ENCODE measurements at regions of chr7 and their contacts with region 1.

Region 1: GRCh38 chr7:77651573-77652162 is 44.6 kb upstream of the RSBN1L start:
- DNase-seq: peak; percentile 61
- H3K4me3 Mint-ChIP-seq: no peak overlapping the region
- H3K27ac Mint-ChIP-seq: no peak overlapping the region
- H3K4me1 Mint-ChIP-seq: no peaks in the 10 kb centered on the region
- H3K27me3 Mint-ChIP-seq: no peaks in the 10 kb centered on the region
- CTCF ChIP-seq: peak; percentile 66

Region 2: GRCh38 chr7:77439572-77439971 is 212.1 kb before region 1 on chr7:
- CTCF ChIA-PET with region 1: interaction called, 23 read pairs
- POLR2A ChIA-PET with region 1: no interaction called
- intact Hi-C with region 1: no loop called
- DNase-seq: peak; percentile 76
- H3K4me3 Mint-ChIP-seq: no peak overlapping the region
- H3K27ac Mint-ChIP-seq: no peak overlapping the region
- H3K4me1 Mint-ChIP-seq: peaks cover 14% of the 10 kb centered on the region
- H3K27me3 Mint-ChIP-seq: no peaks in the 10 kb centered on the region
- CTCF ChIP-seq: peak; percentile 41

Region 3: GRCh38 chr7:77498659-77499422 is 152.8 kb before region 1 on chr7:
- CTCF ChIA-PET with region 1: no interaction called
- POLR2A ChIA-PET with region 1: no interaction called
- intact Hi-C with region 1: no loop called
- DNase-seq: no peak
- H3K4me3 Mint-ChIP-seq: no peak overlapping the region
- H3K27ac Mint-ChIP-seq: no peak overlapping the region
- H3K4me1 Mint-ChIP-seq: peaks cover 7% of the 10 kb centered on the region
- H3K27me3 Mint-ChIP-seq: no peaks in the 10 kb centered on the region
- CTCF ChIP-seq: no peak

Region 4: GRCh38 chr7:77667459-77668086 is 15.9 kb after region 1 on chr7:
- CTCF ChIA-PET with region 1: interaction called, 25 read pairs
- POLR2A ChIA-PET with region 1: no interaction called
- intact Hi-C with region 1: no loop called
- DNase-seq: no peak
- H3K4me3 Mint-ChIP-seq: no peak overlapping the region
- H3K27ac Mint-ChIP-seq: no peak overlapping the region
- H3K4me1 Mint-ChIP-seq: peaks cover 5% of the 10 kb centered on the region
- H3K27me3 Mint-ChIP-seq: no peaks in the 10 kb centered on the region
- CTCF ChIP-seq: no peak

Region 5: GRCh38 chr7:77684030-77684429 is 32.4 kb after region 1 on chr7:
- CTCF ChIA-PET with region 1: interaction called, 11 read pairs
- POLR2A ChIA-PET with region 1: interaction called, 3 read pairs
- intact Hi-C with region 1: no loop called
- DNase-seq: peak; percentile 45
- H3K4me3 Mint-ChIP-seq: no peak overlapping the region
- H3K27ac Mint-ChIP-seq: no peak overlapping the region
- H3K4me1 Mint-ChIP-seq: peaks cover 23% of the 10 kb centered on the region
- H3K27me3 Mint-ChIP-seq: no peaks in the 10 kb centered on the region
- CTCF ChIP-seq: no peak

Region 6: GRCh38 chr7:77747178-77747577 is 95.5 kb after region 1 on chr7:
- CTCF ChIA-PET with region 1: interaction called, 10 read pairs
- POLR2A ChIA-PET with region 1: no interaction called
- intact Hi-C with region 1: no loop called
- DNase-seq: no peak
- H3K4me3 Mint-ChIP-seq: no peak overlapping the region
- H3K27ac Mint-ChIP-seq: no peak overlapping the region
- H3K4me1 Mint-ChIP-seq: no peaks in the 10 kb centered on the region
- H3K27me3 Mint-ChIP-seq: no peaks in the 10 kb centered on the region
- CTCF ChIP-seq: no peak

Region 7: DNA sequence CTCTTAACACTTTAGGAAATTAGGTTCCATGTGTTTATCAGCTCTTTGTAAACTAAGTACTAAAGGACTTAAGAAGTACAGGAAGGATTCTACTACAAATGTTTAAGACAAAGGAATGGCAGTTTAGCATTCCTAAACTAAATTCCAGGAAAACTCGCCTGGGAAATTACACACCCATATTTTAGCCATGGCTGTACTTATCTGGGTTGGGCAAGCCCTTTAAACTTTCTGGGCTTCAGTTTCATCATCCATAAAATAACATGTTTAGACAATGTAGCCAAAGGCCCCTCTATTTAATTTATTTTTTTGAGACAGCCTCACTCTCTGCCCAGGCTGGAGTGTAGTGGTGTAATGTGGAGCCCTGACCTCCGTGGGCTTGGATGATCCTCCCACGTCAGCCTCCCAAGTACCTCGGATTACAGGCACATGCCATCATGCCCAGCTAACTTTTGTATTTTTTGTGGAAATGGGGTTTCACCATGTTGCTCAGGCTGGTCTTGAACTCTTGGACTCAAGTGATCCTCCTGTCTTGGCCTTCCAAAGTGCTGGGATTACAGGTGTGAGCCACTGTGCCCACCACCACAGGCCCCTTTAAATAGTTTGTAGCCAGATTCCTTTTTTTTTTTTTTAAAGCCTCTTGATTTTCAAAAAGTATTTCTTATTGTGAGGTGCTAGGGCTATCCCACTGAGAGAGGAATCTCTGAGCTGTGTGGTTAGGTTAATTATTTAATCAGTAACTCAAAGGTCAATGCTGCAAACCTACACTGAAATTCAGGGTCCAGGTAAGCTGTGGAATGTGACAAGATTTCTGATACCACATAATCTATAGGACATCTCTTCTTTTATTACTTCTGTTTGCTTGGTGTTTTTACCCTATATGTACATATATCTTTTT is 114.5 kb after region 1 on chr7:
- CTCF ChIA-PET with region 1: interaction called, 196 read pairs
- POLR2A ChIA-PET with region 1: interaction called, 3 read pairs
- intact Hi-C with region 1: no loop called
- DNase-seq: no peak
- H3K4me3 Mint-ChIP-seq: no peak overlapping the region
- H3K27ac Mint-ChIP-seq: no peak overlapping the region
- H3K4me1 Mint-ChIP-seq: peaks cover 6% of the 10 kb centered on the region
- H3K27me3 Mint-ChIP-seq: no peaks in the 10 kb centered on the region
- CTCF ChIP-seq: no peak

Region 8: DNA sequence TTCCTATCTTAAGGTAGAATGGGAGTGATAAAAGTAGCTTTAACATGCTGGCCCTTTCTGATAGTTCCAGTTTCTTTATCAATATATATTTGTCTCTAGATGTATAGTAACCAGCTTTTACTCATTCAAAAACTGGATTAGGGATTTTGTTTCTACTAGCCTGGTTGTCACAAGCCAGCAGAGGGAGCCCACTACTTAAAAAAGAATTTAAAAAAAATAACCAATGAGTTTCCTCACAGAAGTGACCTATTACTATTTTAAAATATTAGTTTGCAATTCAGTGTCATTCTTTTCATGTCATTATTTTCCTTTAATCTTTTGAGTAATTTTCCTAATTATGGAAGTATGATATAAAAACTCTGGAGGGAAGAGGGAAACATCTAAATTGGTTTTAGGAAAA is 289.0 kb after region 1 on chr7:
- CTCF ChIA-PET with region 1: interaction called, 34 read pairs
- POLR2A ChIA-PET with region 1: interaction called, 3 read pairs
- intact Hi-C with region 1: loop called (anchors 5 kb)
- DNase-seq: peak; percentile 44
- H3K4me3 Mint-ChIP-seq: no peak overlapping the region
- H3K27ac Mint-ChIP-seq: no peak overlapping the region
- H3K4me1 Mint-ChIP-seq: no peaks in the 10 kb centered on the region
- H3K27me3 Mint-ChIP-seq: no peaks in the 10 kb centered on the region
- CTCF ChIP-seq: peak; percentile 66

Region 9: GRCh38 chr7:78383096-78383880 is 731.6 kb after region 1 on chr7:
- CTCF ChIA-PET with region 1: no interaction called
- POLR2A ChIA-PET with region 1: no interaction called
- intact Hi-C with region 1: no loop called
- DNase-seq: no peak
- H3K4me3 Mint-ChIP-seq: no peak overlapping the region
- H3K27ac Mint-ChIP-seq: no peak overlapping the region
- H3K4me1 Mint-ChIP-seq: no peaks in the 10 kb centered on the region
- H3K27me3 Mint-ChIP-seq: peaks cover 80% of the 10 kb centered on the region
- CTCF ChIP-seq: no peak